B cell (primary cell): ENCODE measurements at regions of chr17 and their contacts with region 1.

Region 1: DNA sequence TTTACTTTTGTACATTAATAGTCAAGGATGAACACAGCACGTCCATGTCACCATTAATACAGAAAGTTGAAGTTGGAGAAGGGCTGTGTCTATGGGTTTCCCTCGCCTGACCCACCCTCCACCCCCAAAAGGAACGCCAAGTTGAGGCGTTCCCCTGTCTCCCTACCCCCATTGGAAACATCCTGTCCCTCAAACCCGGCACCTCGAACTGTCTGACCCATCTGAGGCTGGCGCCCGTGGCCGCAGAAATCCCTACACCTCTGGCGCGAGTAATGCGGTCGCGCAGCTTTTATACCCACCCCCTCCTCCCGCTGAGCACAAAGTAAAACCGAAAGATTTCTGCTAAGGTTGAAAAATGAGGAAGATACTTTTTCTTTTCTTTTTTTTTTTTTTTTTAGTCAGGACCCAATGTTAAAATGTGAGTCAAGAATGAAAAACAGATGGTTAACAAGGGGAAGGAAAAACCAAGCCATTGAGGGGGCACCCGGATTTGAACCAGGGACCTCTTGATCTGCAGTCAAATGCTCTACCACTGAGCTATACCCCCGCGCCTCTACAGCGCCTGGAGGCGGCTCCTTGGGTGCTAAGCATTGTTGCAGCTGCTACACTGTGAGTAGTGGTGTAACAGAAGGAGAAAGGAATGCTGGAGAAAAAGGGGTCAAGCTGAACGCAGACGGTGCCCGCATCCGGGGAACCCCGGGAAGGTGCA is 887 bp upstream of the LASP1 start:
- DNase-seq: peak; percentile 93
- ATAC-seq: peak; percentile 50
- H3K4me3 ChIP-seq: peak overlapping the region; percentile 43 to 100 (median 100)
- H3K4me3 Mint-ChIP-seq: peak overlapping the region; percentile 99
- H3K27ac ChIP-seq: peak overlapping the region; percentile 78 to 87
- H3K27ac Mint-ChIP-seq: peak overlapping the region; percentile 99
- H3K4me1 ChIP-seq: peaks cover 40 to 55% of the 10 kb centered on the region in 2 donors
- H3K4me1 Mint-ChIP-seq: peaks cover 57% of the 10 kb centered on the region
- H3K27me3 ChIP-seq: no peaks in the 10 kb centered on the region
- H3K27me3 Mint-ChIP-seq: no peaks in the 10 kb centered on the region
- CTCF ChIP-seq: no peak

Region 2: GRCh38 chr17:38685491-38685890 is 183.5 kb before region 1 on chr17:
- CTCF ChIA-PET with region 1: no interaction called
- POLR2A ChIA-PET with region 1: no interaction called
- intact Hi-C with region 1: no loop called
- DNase-seq: no peak
- ATAC-seq: no peak
- H3K4me3 ChIP-seq: no peak overlapping the region
- H3K4me3 Mint-ChIP-seq: no peak overlapping the region
- H3K27ac ChIP-seq: no peak overlapping the region
- H3K27ac Mint-ChIP-seq: no peak overlapping the region
- H3K4me1 ChIP-seq: no peaks in the 10 kb centered on the region
- H3K4me1 Mint-ChIP-seq: no peaks in the 10 kb centered on the region
- H3K27me3 ChIP-seq: peaks cover 0 to 4% (median 0%) of the 10 kb centered on the region in 4 experiments
- H3K27me3 Mint-ChIP-seq: peaks cover 19% of the 10 kb centered on the region
- CTCF ChIP-seq: no peak

Region 3: GRCh38 chr17:38729886-38730525 is 139.0 kb before region 1 on chr17 and contains the start of gene CISD3:
- CTCF ChIA-PET with region 1: no interaction called
- POLR2A ChIA-PET with region 1: interaction called, 11 read pairs
- intact Hi-C with region 1: no loop called
- DNase-seq: peak; percentile 92
- ATAC-seq: peak; percentile 91
- H3K4me3 ChIP-seq: peak within 1 kb of the TSS; percentile 13 to 85 (median 62)
- H3K4me3 Mint-ChIP-seq: peak within 1 kb of the TSS; percentile 87
- H3K27ac ChIP-seq: peak within 1 kb of the TSS; percentile 79
- H3K27ac Mint-ChIP-seq: peak within 1 kb of the TSS; percentile 89
- H3K4me1 ChIP-seq: peaks cover 32 to 60% of the 10 kb centered on the region in 2 donors
- H3K4me1 Mint-ChIP-seq: peaks cover 59% of the 10 kb centered on the region
- H3K27me3 ChIP-seq: no peaks in the 10 kb centered on the region
- H3K27me3 Mint-ChIP-seq: no peaks in the 10 kb centered on the region
- CTCF ChIP-seq: peak; percentile 71
- total RNA-seq, gene CISD3: 11.3 TPM in 2 replicates

Region 4: DNA sequence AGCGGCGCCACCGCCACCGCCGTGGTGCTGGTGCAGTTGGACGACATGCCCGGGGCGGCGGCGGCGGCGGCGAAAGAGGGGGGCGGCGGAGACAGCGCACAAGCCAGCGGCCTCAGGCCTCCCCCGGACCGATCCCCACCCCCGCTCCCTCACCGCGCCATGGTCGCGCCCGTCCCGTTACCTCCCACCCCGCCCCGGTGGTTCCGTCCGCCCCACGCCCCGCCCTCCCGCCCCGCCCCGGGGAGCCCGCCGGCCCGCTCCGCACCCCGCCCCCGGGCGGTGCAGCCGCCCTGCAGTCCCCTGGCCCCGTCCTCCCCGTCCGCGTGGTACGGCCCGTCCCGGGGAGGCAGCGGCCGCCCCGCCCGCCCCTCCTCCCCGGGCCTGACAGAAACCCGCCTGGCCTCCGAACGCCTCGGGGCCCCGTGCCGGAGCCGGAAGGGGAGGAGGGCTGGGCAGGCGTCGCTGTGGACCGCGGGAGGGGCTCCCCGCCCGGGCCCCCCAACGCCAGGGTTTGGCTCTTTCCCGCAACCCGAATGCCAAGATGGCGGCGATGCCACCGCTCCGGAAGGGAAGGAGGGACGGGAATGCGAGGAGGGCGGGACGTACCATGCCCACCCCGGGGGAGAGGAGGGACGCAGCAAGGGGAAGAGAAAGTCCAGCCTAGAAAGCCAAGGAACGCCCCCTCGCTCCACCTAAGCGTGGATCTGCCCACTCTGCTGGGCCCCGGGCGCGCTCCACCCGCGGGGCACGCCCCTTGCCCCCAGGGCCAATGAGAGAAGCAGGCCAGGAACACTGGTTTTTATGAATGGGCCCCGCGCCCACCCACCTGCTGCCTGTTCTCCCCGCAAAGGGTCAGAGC is 69.4 kb before region 1 on chr17 and contains the start of gene PIP4K2B:
- CTCF ChIA-PET with region 1: interaction called, 4 read pairs
- POLR2A ChIA-PET with region 1: interaction called, 5 read pairs
- intact Hi-C with region 1: loop called (anchors 1 kb)
- DNase-seq: peak; percentile 94
- ATAC-seq: peak; percentile 84
- H3K4me3 ChIP-seq: peak within 1 kb of the TSS; percentile 64 to 88 (median 75)
- H3K4me3 Mint-ChIP-seq: peak within 1 kb of the TSS; percentile 99
- H3K27ac ChIP-seq: peak within 1 kb of the TSS; percentile 72 to 79
- H3K27ac Mint-ChIP-seq: peak within 1 kb of the TSS; percentile 96
- H3K4me1 ChIP-seq: peaks cover 17 to 25% of the 10 kb centered on the region in 2 donors
- H3K4me1 Mint-ChIP-seq: peaks cover 34% of the 10 kb centered on the region
- H3K27me3 ChIP-seq: no peaks in the 10 kb centered on the region
- H3K27me3 Mint-ChIP-seq: no peaks in the 10 kb centered on the region
- CTCF ChIP-seq: no peak
- total RNA-seq, gene PIP4K2B: 42.9 and 46.8 TPM in 2 replicates

Region 5: GRCh38 chr17:38853292-38854219 is 15.4 kb before region 1 on chr17 and contains the start of gene RPL23:
- CTCF ChIA-PET with region 1: interaction called, 50 read pairs
- POLR2A ChIA-PET with region 1: interaction called, 91 read pairs
- intact Hi-C with region 1: loop called (anchors 1 kb)
- DNase-seq: peak; percentile 98
- ATAC-seq: peak; percentile 91
- H3K4me3 ChIP-seq: peak within 1 kb of the TSS; percentile 70 to 99 (median 73)
- H3K4me3 Mint-ChIP-seq: peak within 1 kb of the TSS; percentile 98
- H3K27ac ChIP-seq: peak within 1 kb of the TSS; percentile 92
- H3K27ac Mint-ChIP-seq: peak within 1 kb of the TSS; percentile 100
- H3K4me1 ChIP-seq: peaks cover 23 to 27% of the 10 kb centered on the region in 2 donors
- H3K4me1 Mint-ChIP-seq: peaks cover 41% of the 10 kb centered on the region
- H3K27me3 ChIP-seq: no peaks in the 10 kb centered on the region
- H3K27me3 Mint-ChIP-seq: no peaks in the 10 kb centered on the region
- CTCF ChIP-seq: no peak
- total RNA-seq, gene RPL23: 1,692 and 1,753 TPM in 2 replicates

Region 6: GRCh38 chr17:38922538-38923297 is 53.7 kb after region 1 on chr17:
- CTCF ChIA-PET with region 1: interaction called, 15 read pairs
- POLR2A ChIA-PET with region 1: interaction called, 20 read pairs
- intact Hi-C with region 1: loop called (anchors 1 kb)
- DNase-seq: no peak
- ATAC-seq: no peak
- H3K4me3 ChIP-seq: no peak overlapping the region
- H3K4me3 Mint-ChIP-seq: no peak overlapping the region
- H3K27ac ChIP-seq: no peak overlapping the region
- H3K27ac Mint-ChIP-seq: no peak overlapping the region
- H3K4me1 ChIP-seq: peaks cover 0 to 3% of the 10 kb centered on the region in 2 donors
- H3K4me1 Mint-ChIP-seq: peaks cover 22% of the 10 kb centered on the region
- H3K27me3 ChIP-seq: no peaks in the 10 kb centered on the region
- H3K27me3 Mint-ChIP-seq: no peaks in the 10 kb centered on the region
- CTCF ChIP-seq: no peak

Region 7: DNA sequence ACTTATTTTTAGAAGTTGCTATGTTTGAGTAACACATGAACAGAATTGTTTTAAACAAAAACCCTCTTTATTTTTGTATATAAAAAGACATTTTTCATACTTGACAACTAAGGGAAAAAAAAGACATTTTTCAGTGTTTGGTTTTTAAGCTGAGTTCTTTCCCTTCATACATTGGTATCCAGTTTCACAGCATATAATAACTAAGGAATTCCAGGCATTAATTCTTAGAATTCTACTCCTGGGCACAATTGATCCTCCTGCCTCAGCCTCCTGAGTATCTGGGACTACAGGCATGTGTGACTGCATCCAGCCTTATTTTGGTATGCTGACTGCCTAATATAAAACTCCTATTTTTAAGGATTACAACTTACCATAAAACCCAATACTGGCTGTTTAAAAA is 89.8 kb after region 1 on chr17:
- CTCF ChIA-PET with region 1: no interaction called
- POLR2A ChIA-PET with region 1: no interaction called
- intact Hi-C with region 1: no loop called
- DNase-seq: no peak
- ATAC-seq: no peak
- H3K4me3 ChIP-seq: no peak overlapping the region
- H3K4me3 Mint-ChIP-seq: no peak overlapping the region
- H3K27ac ChIP-seq: no peak overlapping the region
- H3K27ac Mint-ChIP-seq: no peak overlapping the region
- H3K4me1 ChIP-seq: no peaks in the 10 kb centered on the region
- H3K4me1 Mint-ChIP-seq: no peaks in the 10 kb centered on the region
- H3K27me3 ChIP-seq: no peaks in the 10 kb centered on the region
- H3K27me3 Mint-ChIP-seq: no peaks in the 10 kb centered on the region
- CTCF ChIP-seq: no peak

Region 8: GRCh38 chr17:39209317-39210092 is 340.5 kb after region 1 on chr17:
- CTCF ChIA-PET with region 1: no interaction called
- POLR2A ChIA-PET with region 1: interaction called, 10 read pairs
- intact Hi-C with region 1: no loop called
- DNase-seq: peak; percentile 65
- ATAC-seq: peak; percentile 40
- H3K4me3 ChIP-seq: peak overlapping the region in 4 of 5 experiments; percentile 35 to 52 (median 48)
- H3K4me3 Mint-ChIP-seq: peak overlapping the region; percentile 77
- H3K27ac ChIP-seq: no peak overlapping the region
- H3K27ac Mint-ChIP-seq: peak overlapping the region; percentile 68
- H3K4me1 ChIP-seq: peaks cover 32 to 39% of the 10 kb centered on the region in 2 donors
- H3K4me1 Mint-ChIP-seq: peaks cover 33% of the 10 kb centered on the region
- H3K27me3 ChIP-seq: peaks cover 0 to 12% (median 3%) of the 10 kb centered on the region in 4 experiments
- H3K27me3 Mint-ChIP-seq: no peaks in the 10 kb centered on the region
- CTCF ChIP-seq: no peak